Mammary epithelial cell (primary cell): ENCODE measurements at regions of chr1 and their contacts with region 1.

Region 1: GRCh38 chr1:54081306-54082270 is 28.2 kb downstream of the TCEANC2 start:
- DNase-seq: peak; percentile 72
- H3K4me3 ChIP-seq: no peak overlapping the region
- H3K27ac ChIP-seq: no peak overlapping the region
- H3K4me1 ChIP-seq: peaks cover 4% of the 10 kb centered on the region
- H3K27me3 ChIP-seq: no peaks in the 10 kb centered on the region
- CTCF ChIP-seq: peak; percentile 93 to 99

Region 2: GRCh38 chr1:53860967-53861411 is 220.6 kb before region 1 on chr1:
- CTCF ChIA-PET with region 1: interaction called, 3 read pairs
- dilution Hi-C with region 1: no loop called
- in situ Hi-C with region 1: no loop called
- intact Hi-C with region 1: loop called (anchors 2 kb)
- DNase-seq: peak; percentile 30
- H3K4me3 ChIP-seq: no peak overlapping the region
- H3K27ac ChIP-seq: no peak overlapping the region
- H3K4me1 ChIP-seq: no peaks in the 10 kb centered on the region
- H3K27me3 ChIP-seq: no peaks in the 10 kb centered on the region
- CTCF ChIP-seq: peak; percentile 72 to 85

Region 3: GRCh38 chr1:53878492-53879105 is 203.0 kb before region 1 on chr1:
- CTCF ChIA-PET with region 1: no interaction called
- dilution Hi-C with region 1: no loop called
- in situ Hi-C with region 1: no loop called
- intact Hi-C with region 1: loop called (anchors 5 kb)
- DNase-seq: peak; percentile 44
- H3K4me3 ChIP-seq: no peak overlapping the region
- H3K27ac ChIP-seq: no peak overlapping the region
- H3K4me1 ChIP-seq: no peaks in the 10 kb centered on the region
- H3K27me3 ChIP-seq: no peaks in the 10 kb centered on the region
- CTCF ChIP-seq: peak; percentile 47 to 62

Region 4: GRCh38 chr1:53982034-53982762 is 99.4 kb before region 1 on chr1:
- CTCF ChIA-PET with region 1: no interaction called
- dilution Hi-C with region 1: no loop called
- in situ Hi-C with region 1: no loop called
- intact Hi-C with region 1: no loop called
- DNase-seq: peak; percentile 14
- H3K4me3 ChIP-seq: peak overlapping the region in 2 of 3 experiments; percentile 3 to 4
- H3K27ac ChIP-seq: no peak overlapping the region
- H3K4me1 ChIP-seq: peaks cover 6% of the 10 kb centered on the region
- H3K27me3 ChIP-seq: no peaks in the 10 kb centered on the region
- CTCF ChIP-seq: no peak

Region 5: GRCh38 chr1:53992085-53992874 is 89.3 kb before region 1 on chr1:
- CTCF ChIA-PET with region 1: interaction called, 7 read pairs
- dilution Hi-C with region 1: no loop called
- in situ Hi-C with region 1: no loop called
- intact Hi-C with region 1: loop called (anchors 1 kb)
- DNase-seq: no peak
- H3K4me3 ChIP-seq: no peak overlapping the region
- H3K27ac ChIP-seq: no peak overlapping the region
- H3K4me1 ChIP-seq: no peaks in the 10 kb centered on the region
- H3K27me3 ChIP-seq: peaks cover 3% of the 10 kb centered on the region
- CTCF ChIP-seq: peak; percentile 32 to 64

Region 6: DNA sequence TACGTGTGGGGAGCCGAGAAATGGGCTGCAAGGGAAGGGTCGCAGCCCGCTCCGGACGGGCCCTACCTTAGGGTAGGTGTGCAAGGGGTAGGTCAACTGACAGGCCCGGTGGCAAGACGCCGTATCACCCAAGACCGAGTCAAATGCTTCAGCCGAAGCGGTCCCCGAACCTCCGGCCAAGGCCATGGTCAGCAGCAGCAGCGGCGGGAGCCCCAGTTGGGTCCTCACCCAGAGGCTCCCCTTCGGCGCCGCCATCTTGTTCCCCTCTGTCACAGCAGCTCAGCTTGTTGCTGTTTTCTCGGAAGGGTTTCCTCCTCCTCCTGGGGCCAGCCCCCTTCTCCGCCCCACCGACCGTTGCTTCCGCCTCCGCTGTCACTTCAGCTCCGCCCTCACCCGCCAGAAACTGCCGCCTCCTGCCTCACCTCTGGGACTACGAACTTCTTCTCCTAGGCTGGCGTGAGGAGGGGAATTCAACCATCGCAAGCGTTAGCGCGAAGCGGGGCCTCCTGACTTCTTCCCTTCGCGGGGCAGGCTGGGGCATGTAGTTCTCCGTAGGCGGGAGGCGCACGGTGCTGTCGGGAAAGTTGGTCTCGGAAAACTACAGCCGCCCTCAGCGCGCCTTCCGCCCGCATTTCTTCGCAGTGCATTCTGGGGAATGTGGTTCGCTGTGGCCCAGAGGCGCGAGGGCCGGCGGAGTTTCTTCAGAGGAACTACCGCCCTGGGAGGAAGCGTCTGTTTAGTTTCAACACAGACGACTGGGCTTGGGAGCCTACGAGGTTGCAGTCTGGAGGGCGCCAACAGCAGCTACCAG is 28.4 kb before region 1 on chr1 and contains the starts of genes TCEANC2 and TMEM59:
- CTCF ChIA-PET with region 1: no interaction called
- dilution Hi-C with region 1: no loop called
- in situ Hi-C with region 1: no loop called
- intact Hi-C with region 1: loop called (anchors 1 kb)
- DNase-seq: peak; percentile 100
- H3K4me3 ChIP-seq: peak within 1 kb of the TSS; percentile 82 to 90 (median 89)
- H3K27ac ChIP-seq: peak within 1 kb of the TSS; percentile 91
- H3K4me1 ChIP-seq: peaks cover 6% of the 10 kb centered on the region
- H3K27me3 ChIP-seq: no peaks in the 10 kb centered on the region
- CTCF ChIP-seq: no peak
- total RNA-seq, gene TCEANC2: 3.8 to 5.5 TPM
- total RNA-seq, gene TMEM59: 164 to 223 TPM

Region 7: DNA sequence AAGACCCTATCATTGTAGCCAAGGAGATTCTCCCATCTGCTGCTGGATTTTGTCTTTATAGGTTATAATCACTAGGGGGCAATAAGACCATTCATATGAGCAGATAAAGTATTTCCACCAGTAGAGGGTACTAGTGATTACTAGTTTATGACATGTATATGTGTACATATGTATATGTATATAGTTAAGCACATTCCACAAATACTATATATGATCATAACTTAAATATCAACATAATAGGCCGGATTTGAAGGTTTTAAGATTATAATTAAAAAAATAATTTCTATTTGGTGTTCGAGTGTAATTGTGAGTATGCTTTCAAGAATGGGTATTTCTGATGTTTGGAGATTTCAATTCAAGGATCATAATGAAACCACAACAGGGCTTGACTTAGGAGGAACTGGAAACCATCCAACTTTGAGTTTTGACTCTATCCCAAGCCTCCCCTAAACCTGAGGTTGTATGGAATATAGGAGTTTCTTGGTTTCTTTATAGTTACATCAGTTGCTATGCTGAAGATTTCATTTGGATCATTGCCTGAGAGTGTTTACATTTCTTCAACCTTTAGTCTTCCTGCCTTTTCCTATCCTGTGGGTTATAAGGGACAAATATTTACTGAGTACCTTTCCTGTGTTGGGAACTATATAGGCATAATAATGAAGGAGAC is 11.3 kb before region 1 on chr1:
- CTCF ChIA-PET with region 1: no interaction called
- dilution Hi-C with region 1: no loop called
- in situ Hi-C with region 1: no loop called
- intact Hi-C with region 1: loop called (anchors 1 kb)
- DNase-seq: peak; percentile 28
- H3K4me3 ChIP-seq: no peak overlapping the region
- H3K27ac ChIP-seq: no peak overlapping the region
- H3K4me1 ChIP-seq: no peaks in the 10 kb centered on the region
- H3K27me3 ChIP-seq: no peaks in the 10 kb centered on the region
- CTCF ChIP-seq: peak; percentile 76 to 79